Transverse colon (tissue), 4 donors: ENCODE measurements at regions of chr17 and their contacts with region 1.

Region 1: GRCh38 chr17:4420692-4421131 is 13.0 kb upstream of the SPNS3 start:
- DNase-seq: peak; percentile 66
- H3K4me3 ChIP-seq: no peak overlapping the region
- H3K27ac ChIP-seq: no peak overlapping the region
- H3K4me1 ChIP-seq: peaks cover 0 to 5% (median 2%) of the 10 kb centered on the region in 4 donors
- H3K27me3 ChIP-seq: no peaks in the 10 kb centered on the region
- CTCF ChIP-seq: peak; percentile 78 to 88 (median 85)
- EP300 ChIP-seq: no peak
- POLR2A ChIP-seq: no peak

Region 2: GRCh38 chr17:4199818-4200402 is 220.8 kb before region 1 on chr17:
- in situ Hi-C with region 1: loop called in 2 of 4 experiments (anchors 5 to 10 kb)
- intact Hi-C with region 1: no loop called
- DNase-seq: no peak
- H3K4me3 ChIP-seq: no peak overlapping the region
- H3K27ac ChIP-seq: no peak overlapping the region
- H3K4me1 ChIP-seq: peaks cover 0 to 11% (median 6%) of the 10 kb centered on the region in 4 donors
- H3K27me3 ChIP-seq: no peaks in the 10 kb centered on the region
- CTCF ChIP-seq: peak; percentile 67 to 78 (median 75)
- EP300 ChIP-seq: no peak
- POLR2A ChIP-seq: no peak